PC-9 (cell line): ENCODE measurements at regions of chr3 and their contacts with region 1.

Region 1: DNA sequence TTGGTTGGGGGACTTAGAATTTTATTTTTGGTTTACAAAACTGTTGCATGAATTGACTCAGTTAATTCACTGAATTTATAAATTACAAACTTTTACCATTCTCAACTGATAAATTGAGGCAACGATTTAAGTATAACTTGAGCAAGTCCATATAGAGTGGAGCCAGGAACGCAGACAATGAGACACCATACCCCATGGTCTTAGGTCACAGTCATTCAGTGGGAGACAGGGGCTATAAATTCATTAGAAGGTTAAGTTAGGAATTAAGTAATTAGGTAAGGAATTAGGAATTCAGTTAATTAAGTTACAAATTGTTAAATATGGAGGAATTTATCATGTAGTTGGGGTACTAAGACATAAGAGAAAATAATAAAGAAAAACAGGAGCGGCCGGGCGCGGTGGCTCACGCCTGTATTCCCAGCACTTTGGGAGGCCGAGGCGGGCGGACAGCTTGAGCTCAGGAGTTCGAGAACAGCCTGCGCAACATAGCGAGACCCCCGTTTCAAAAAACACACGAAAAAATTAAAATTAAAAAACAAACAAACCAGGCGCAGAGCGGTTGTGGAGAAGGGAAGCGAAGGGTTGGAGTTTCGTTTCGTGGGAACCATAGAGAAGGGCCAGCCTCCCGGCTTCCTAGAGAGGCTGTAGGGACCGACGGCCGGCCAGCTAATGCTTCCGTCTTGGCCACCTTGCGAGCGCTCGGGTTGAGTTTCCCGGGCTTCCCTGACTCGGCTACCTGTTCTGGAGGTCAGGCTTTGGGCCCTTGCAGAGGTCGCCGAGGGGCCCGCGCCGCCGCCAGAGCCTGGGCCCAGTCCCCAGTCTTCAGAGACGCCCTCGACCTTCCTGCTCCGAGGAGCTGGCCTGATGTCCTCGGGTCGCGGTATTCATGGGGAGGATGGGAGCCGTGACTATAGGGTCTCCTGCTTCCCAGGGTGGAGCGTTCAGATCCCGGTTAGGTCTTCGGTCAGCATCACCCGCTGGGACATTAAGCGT is at the start of gene ZNF619:
- DNase-seq: peak; percentile 51 to 66
- H3K4me3 ChIP-seq: peak within 1 kb of the TSS; percentile 67
- H3K27ac ChIP-seq: no peak within 1 kb of the TSS
- H3K4me1 ChIP-seq: peaks cover 12% of the 10 kb centered on the region
- H3K27me3 ChIP-seq: no peaks in the 10 kb centered on the region
- CTCF ChIP-seq: no peak
- total RNA-seq, gene ZNF619: 5.1 and 6.9 TPM in 2 replicates

Region 2: DNA sequence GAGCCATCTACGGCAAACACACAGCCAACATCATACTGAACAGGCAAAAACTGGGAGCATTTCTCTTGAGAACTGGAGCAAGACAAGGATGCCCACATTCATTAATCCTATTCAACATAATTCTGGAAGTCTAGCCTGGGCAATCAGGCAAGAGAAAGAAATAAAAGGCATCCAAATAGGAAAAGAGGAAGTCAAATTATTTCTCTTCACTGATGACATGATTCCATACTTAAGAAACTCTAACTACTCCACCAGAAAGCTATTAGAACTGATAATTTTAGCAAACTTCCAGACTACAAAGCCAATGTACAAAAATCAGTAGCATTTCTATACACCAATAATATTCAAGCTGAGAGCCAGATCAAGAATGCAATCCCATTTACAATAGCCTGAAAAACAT is 107.1 kb before region 1 on chr3:
- CTCF ChIA-PET with region 1: no interaction called
- POLR2A ChIA-PET with region 1: no interaction called
- intact Hi-C with region 1: no loop called
- DNase-seq: no peak
- H3K4me3 ChIP-seq: no peak overlapping the region
- H3K27ac ChIP-seq: no peak overlapping the region
- H3K4me1 ChIP-seq: no peaks in the 10 kb centered on the region
- H3K27me3 ChIP-seq: no peaks in the 10 kb centered on the region
- CTCF ChIP-seq: no peak

Region 3: GRCh38 chr3:40505599-40506462 is 29.1 kb after region 1 on chr3 and contains the start of gene ZNF620:
- CTCF ChIA-PET with region 1: no interaction called
- POLR2A ChIA-PET with region 1: no interaction called
- intact Hi-C with region 1: loop called (anchors 1 kb)
- DNase-seq: peak; percentile 40 to 73
- H3K4me3 ChIP-seq: peak within 1 kb of the TSS; percentile 70
- H3K27ac ChIP-seq: no peak within 1 kb of the TSS
- H3K4me1 ChIP-seq: peaks cover 19% of the 10 kb centered on the region
- H3K27me3 ChIP-seq: no peaks in the 10 kb centered on the region
- CTCF ChIP-seq: no peak; the same call in 1 of the 2 replicates
- total RNA-seq, gene ZNF620: 4.1 and 4.7 TPM in 2 replicates